ENCODE measurements at regions of chr1 and their contacts with region 1.

Region 1: GRCh38 chr1:172582893-172583292 is 49.9 kb downstream of the SUCO start:
- DNase-seq: no peak
- H3K4me3 ChIP-seq: no peak overlapping the region
- H3K27ac ChIP-seq: no peak overlapping the region
- H3K4me1 ChIP-seq: peaks cover 34% of the 10 kb centered on the region
- H3K27me3 ChIP-seq: no peaks in the 10 kb centered on the region
- CTCF ChIP-seq: no peak
- POLR2A ChIP-seq: no peak

Region 2: GRCh38 chr1:172545396-172546004 is 37.4 kb before region 1 on chr1:
- CTCF ChIA-PET with region 1: no interaction called
- POLR2A ChIA-PET with region 1: no interaction called
- dilution Hi-C with region 1: no loop called
- intact Hi-C with region 1: loop called (anchors 5 kb)
- DNase-seq: no peak
- H3K4me3 ChIP-seq: no peak overlapping the region
- H3K27ac ChIP-seq: no peak overlapping the region
- H3K4me1 ChIP-seq: peaks cover 22% of the 10 kb centered on the region
- H3K27me3 ChIP-seq: no peaks in the 10 kb centered on the region
- CTCF ChIP-seq: no peak
- POLR2A ChIP-seq: no peak

Measured in endothelial cell of umbilical vein (primary cell).